ENCODE measurements at regions of chr14 and their contacts with region 1.

Region 1: GRCh38 chr14:105086833-105087307 is 21.6 kb upstream of the GPR132 start:
- DNase-seq: peak; percentile 65 to 92 (median 81)
- ATAC-seq: peak; percentile 86 to 91 (median 87)
- H3K4me3 ChIP-seq: peak overlapping the region; percentile 44 to 65
- H3K4me3 Mint-ChIP-seq: peak overlapping the region; percentile 71 to 79 (median 74)
- H3K27ac ChIP-seq: peak overlapping the region; percentile 34
- H3K27ac Mint-ChIP-seq: peak overlapping the region; percentile 52 to 70
- H3K4me1 ChIP-seq: peaks cover 4 to 38% of the 10 kb centered on the region in 2 experiments
- H3K4me1 Mint-ChIP-seq: peaks cover 12 to 21% (median 20%) of the 10 kb centered on the region in 3 donors
- H3K27me3 ChIP-seq: peaks cover 0 to 9% of the 10 kb centered on the region in 2 experiments
- H3K27me3 Mint-ChIP-seq: peaks cover 3 to 5% of the 10 kb centered on the region in 2 donors

Region 2: GRCh38 chr14:105059035-105059924 is 27.6 kb before region 1 on chr14:
- CTCF ChIA-PET with region 1: interaction called in 1 of 2 experiments, 10 read pairs
- POLR2A ChIA-PET with region 1: interaction called in 1 of 2 experiments, 9 read pairs
- DNase-seq: peak in 33 of 35 experiments; percentile 41 to 94 (median 80)
- ATAC-seq: peak; percentile 36 to 82 (median 40)
- H3K4me3 ChIP-seq: peak overlapping the region in 1 of 2 donors; percentile 62
- H3K4me3 Mint-ChIP-seq: peak overlapping the region; percentile 80 to 85 (median 82)
- H3K27ac ChIP-seq: peak overlapping the region; percentile 96
- H3K27ac Mint-ChIP-seq: peak overlapping the region; percentile 97 to 98
- H3K4me1 ChIP-seq: peaks cover 29 to 63% of the 10 kb centered on the region in 2 experiments
- H3K4me1 Mint-ChIP-seq: peaks cover 54 to 57% (median 56%) of the 10 kb centered on the region in 3 donors
- H3K27me3 ChIP-seq: no peaks in the 10 kb centered on the region
- H3K27me3 Mint-ChIP-seq: no peaks in the 10 kb centered on the region

Region 3: GRCh38 chr14:105065280-105066228 is 21.3 kb before region 1 on chr14 and contains the start of gene GPR132:
- CTCF ChIA-PET with region 1: interaction called in 1 of 2 experiments, 11 read pairs
- POLR2A ChIA-PET with region 1: interaction called in 1 of 2 experiments, 5 read pairs
- DNase-seq: peak; percentile 61 to 98 (median 93)
- ATAC-seq: peak; percentile 89 to 93 (median 90)
- H3K4me3 ChIP-seq: peak within 1 kb of the TSS; percentile 87 to 90
- H3K4me3 Mint-ChIP-seq: peak within 1 kb of the TSS; percentile 80 to 85 (median 82)
- H3K27ac ChIP-seq: peak within 1 kb of the TSS; percentile 96
- H3K27ac Mint-ChIP-seq: peak within 1 kb of the TSS; percentile 97 to 98
- H3K4me1 ChIP-seq: peaks cover 43 to 99% of the 10 kb centered on the region in 2 experiments
- H3K4me1 Mint-ChIP-seq: peaks cover 76 to 80% (median 80%) of the 10 kb centered on the region in 3 donors
- H3K27me3 ChIP-seq: no peaks in the 10 kb centered on the region
- H3K27me3 Mint-ChIP-seq: no peaks in the 10 kb centered on the region
- total RNA-seq, gene GPR132: 47.0 to 58.0 (median 49.7) TPM

Region 4: DNA sequence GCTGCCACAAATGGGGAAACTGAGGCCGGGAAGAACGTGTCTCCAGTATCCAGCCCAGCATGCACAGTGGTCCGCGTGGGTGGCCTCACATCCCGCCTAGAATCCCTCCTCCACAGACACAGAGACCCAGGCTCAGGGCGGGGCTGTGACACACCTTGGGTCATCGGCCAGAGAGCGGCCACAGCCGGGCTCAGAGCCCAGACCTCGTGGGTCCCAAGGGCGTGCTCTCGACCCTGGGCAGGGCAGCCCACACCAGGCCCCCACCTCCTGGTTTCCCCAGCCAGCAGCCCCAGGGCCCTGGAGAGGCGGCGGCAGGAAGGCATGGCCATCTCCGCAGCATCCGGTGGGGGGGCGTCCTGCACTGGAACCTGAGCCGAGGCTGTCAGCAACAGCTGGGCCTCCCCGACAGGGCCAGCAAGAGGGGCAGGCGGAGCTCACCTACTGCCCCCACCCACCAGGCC is 66.4 kb after region 1 on chr14:
- CTCF ChIA-PET with region 1: no interaction called
- POLR2A ChIA-PET with region 1: no interaction called
- DNase-seq: no peak
- ATAC-seq: peak in 1 of 4 experiments; percentile 9
- H3K4me3 ChIP-seq: no peak overlapping the region
- H3K4me3 Mint-ChIP-seq: no peak overlapping the region
- H3K27ac ChIP-seq: no peak overlapping the region
- H3K27ac Mint-ChIP-seq: no peak overlapping the region
- H3K4me1 ChIP-seq: no peaks in the 10 kb centered on the region
- H3K4me1 Mint-ChIP-seq: no peaks in the 10 kb centered on the region
- H3K27me3 ChIP-seq: peaks cover 0 to 10% of the 10 kb centered on the region in 2 experiments
- H3K27me3 Mint-ChIP-seq: no peaks in the 10 kb centered on the region